ENCODE measurements at regions of chr1 and their contacts with region 1.

Region 1: DNA sequence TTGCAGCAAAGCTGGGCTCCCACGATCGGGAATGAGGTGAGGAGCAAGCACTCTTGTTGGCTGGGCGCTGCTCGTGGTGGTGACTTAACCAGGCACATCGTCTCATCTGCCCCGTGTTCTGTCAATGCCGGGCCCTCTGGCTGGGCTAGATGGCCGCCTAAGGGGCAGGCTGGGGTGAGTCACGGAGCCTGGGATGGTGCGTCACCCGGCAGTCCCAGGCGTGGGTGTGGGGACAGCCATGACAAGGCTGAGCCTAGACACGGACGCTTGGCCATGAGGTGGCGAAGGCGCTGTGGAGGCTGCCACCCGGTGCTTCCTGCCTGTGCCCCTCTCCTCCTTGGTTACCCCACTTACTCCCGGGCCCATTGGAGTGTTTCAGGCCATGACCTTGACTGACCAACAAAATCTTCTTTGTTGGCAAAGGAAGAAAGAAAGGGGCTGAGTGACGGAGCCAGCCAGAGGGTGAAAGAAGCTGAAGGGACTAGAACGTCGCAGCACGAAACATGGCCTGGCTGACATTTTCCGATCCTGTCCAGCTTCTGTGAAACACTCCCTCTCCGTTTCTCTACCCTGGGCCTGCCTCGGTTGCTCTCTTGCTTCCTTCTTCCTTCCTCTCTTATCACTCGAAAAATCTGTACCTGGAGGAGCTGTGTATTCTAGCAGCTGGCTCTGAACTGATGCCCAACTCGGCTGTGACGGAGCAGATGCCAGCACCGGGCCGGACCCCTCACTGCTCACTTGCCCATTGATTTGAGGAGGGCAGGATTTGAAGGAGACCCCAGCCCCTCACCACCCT is 596 bp downstream of the CD247 start:
- DNase-seq: peak; percentile 86 to 89
- ATAC-seq: peak; percentile 76 to 91 (median 83)
- H3K4me3 ChIP-seq: peak overlapping the region; percentile 96
- H3K4me3 Mint-ChIP-seq: peak overlapping the region; percentile 95
- H3K27ac ChIP-seq: peak overlapping the region; percentile 97
- H3K27ac Mint-ChIP-seq: peak overlapping the region; percentile 91 to 100
- H3K4me1 ChIP-seq: peaks cover 36% of the 10 kb centered on the region
- H3K4me1 Mint-ChIP-seq: peaks cover 51 to 60% of the 10 kb centered on the region in 2 donors
- H3K27me3 ChIP-seq: no peaks in the 10 kb centered on the region
- H3K27me3 Mint-ChIP-seq: no peaks in the 10 kb centered on the region
- CTCF ChIP-seq: no peak

Region 2: DNA sequence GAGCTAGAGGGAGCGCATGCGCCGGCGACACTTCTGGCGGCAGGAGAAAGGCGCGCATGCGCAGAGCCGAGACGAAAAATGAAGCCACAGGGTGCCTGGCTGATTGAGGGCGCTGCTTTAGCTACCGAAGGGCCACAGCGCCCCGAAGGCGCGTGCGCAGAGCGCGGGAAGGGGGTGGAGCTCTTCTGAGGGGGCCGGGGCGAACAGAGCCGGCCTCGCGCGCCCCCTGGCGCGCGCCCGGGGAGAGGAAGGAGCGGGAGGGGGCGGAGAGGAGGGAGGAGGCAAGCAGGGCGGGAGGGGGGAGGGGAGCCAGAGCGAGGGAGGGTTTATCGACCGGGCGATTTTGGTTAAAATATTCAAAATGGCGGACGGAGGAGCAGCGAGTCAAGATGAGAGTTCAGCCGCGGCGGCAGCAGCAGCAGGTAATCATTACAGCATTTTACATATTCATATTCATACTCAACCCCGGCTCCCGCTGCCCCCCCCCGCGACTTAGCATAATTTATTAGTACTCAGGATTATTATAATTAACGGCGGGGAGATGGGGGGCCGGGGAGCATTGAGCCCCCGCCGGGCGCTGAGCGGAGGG is 297.1 kb before region 1 on chr1 and contains the start of gene POU2F1:
- intact Hi-C with region 1: loop called (anchors 5 kb)
- DNase-seq: peak; percentile 97 to 100
- ATAC-seq: peak; percentile 77 to 95 (median 81)
- H3K4me3 ChIP-seq: peak within 1 kb of the TSS; percentile 98
- H3K4me3 Mint-ChIP-seq: peak within 1 kb of the TSS; percentile 93
- H3K27ac ChIP-seq: peak within 1 kb of the TSS; percentile 95
- H3K27ac Mint-ChIP-seq: peak within 1 kb of the TSS; percentile 97
- H3K4me1 ChIP-seq: peaks cover 11% of the 10 kb centered on the region
- H3K4me1 Mint-ChIP-seq: peaks cover 46 to 48% of the 10 kb centered on the region in 2 donors
- H3K27me3 ChIP-seq: no peaks in the 10 kb centered on the region
- H3K27me3 Mint-ChIP-seq: no peaks in the 10 kb centered on the region
- CTCF ChIP-seq: peak; percentile 63
- total RNA-seq, gene POU2F1: 39.8 to 44.6 (median 40.9) TPM

Region 3: GRCh38 chr1:167447521-167448136 is 70.1 kb before region 1 on chr1:
- intact Hi-C with region 1: loop called (anchors 2 kb)
- DNase-seq: peak in 1 of 2 donors; percentile 86
- ATAC-seq: peak; percentile 39 to 74 (median 54)
- H3K4me3 ChIP-seq: peak overlapping the region; percentile 9
- H3K4me3 Mint-ChIP-seq: peak overlapping the region; percentile 88
- H3K27ac ChIP-seq: peak overlapping the region; percentile 93
- H3K27ac Mint-ChIP-seq: peak overlapping the region; percentile 91 to 100
- H3K4me1 ChIP-seq: peaks cover 96% of the 10 kb centered on the region
- H3K4me1 Mint-ChIP-seq: peaks cover 88% of the 10 kb centered on the region in 2 donors
- H3K27me3 ChIP-seq: no peaks in the 10 kb centered on the region
- H3K27me3 Mint-ChIP-seq: no peaks in the 10 kb centered on the region
- CTCF ChIP-seq: no peak

Region 4: GRCh38 chr1:167474191-167474716 is 43.5 kb before region 1 on chr1:
- intact Hi-C with region 1: loop called (anchors 1 kb)
- DNase-seq: peak in 1 of 2 donors; percentile 74
- ATAC-seq: peak; percentile 38 to 52 (median 40)
- H3K4me3 ChIP-seq: peak overlapping the region; percentile 6
- H3K4me3 Mint-ChIP-seq: peak overlapping the region; percentile 86
- H3K27ac ChIP-seq: peak overlapping the region; percentile 87
- H3K27ac Mint-ChIP-seq: peak overlapping the region; percentile 91 to 100
- H3K4me1 ChIP-seq: peaks cover 70% of the 10 kb centered on the region
- H3K4me1 Mint-ChIP-seq: peaks cover 91% of the 10 kb centered on the region in 2 donors
- H3K27me3 ChIP-seq: no peaks in the 10 kb centered on the region
- H3K27me3 Mint-ChIP-seq: no peaks in the 10 kb centered on the region
- CTCF ChIP-seq: no peak

Region 5: GRCh38 chr1:167499664-167500101 is 18.1 kb before region 1 on chr1:
- intact Hi-C with region 1: loop called (anchors 1 kb)
- DNase-seq: peak; percentile 19 to 68
- ATAC-seq: peak; percentile 14 to 25 (median 23)
- H3K4me3 ChIP-seq: no peak overlapping the region
- H3K4me3 Mint-ChIP-seq: peak overlapping the region; percentile 87
- H3K27ac ChIP-seq: peak overlapping the region; percentile 97
- H3K27ac Mint-ChIP-seq: peak overlapping the region; percentile 91 to 100
- H3K4me1 ChIP-seq: peaks cover 82% of the 10 kb centered on the region
- H3K4me1 Mint-ChIP-seq: peaks cover 100% of the 10 kb centered on the region in 2 donors
- H3K27me3 ChIP-seq: no peaks in the 10 kb centered on the region
- H3K27me3 Mint-ChIP-seq: no peaks in the 10 kb centered on the region
- CTCF ChIP-seq: no peak

Region 6: GRCh38 chr1:167617153-167618147 is 99.7 kb after region 1 on chr1:
- intact Hi-C with region 1: no loop called
- DNase-seq: peak in 1 of 2 donors; percentile 46
- ATAC-seq: peak; percentile 67 to 83 (median 78)
- H3K4me3 ChIP-seq: peak overlapping the region; percentile 32
- H3K4me3 Mint-ChIP-seq: peak overlapping the region; percentile 47
- H3K27ac ChIP-seq: peak overlapping the region; percentile 76
- H3K27ac Mint-ChIP-seq: peak overlapping the region; percentile 46 to 68
- H3K4me1 ChIP-seq: peaks cover 30% of the 10 kb centered on the region
- H3K4me1 Mint-ChIP-seq: peaks cover 29 to 37% of the 10 kb centered on the region in 2 donors
- H3K27me3 ChIP-seq: no peaks in the 10 kb centered on the region
- H3K27me3 Mint-ChIP-seq: no peaks in the 10 kb centered on the region
- CTCF ChIP-seq: no peak